A673 (cell line): ENCODE measurements at regions of chr16 and their contacts with region 1.

Region 1: GRCh38 chr16:90031186-90031930 is 12.1 kb upstream of the DBNDD1 start:
- DNase-seq: peak; percentile 41
- H3K4me3 ChIP-seq: no peak overlapping the region
- H3K27ac ChIP-seq: no peak overlapping the region
- H3K4me1 ChIP-seq: no peaks in the 10 kb centered on the region
- H3K27me3 ChIP-seq: no peaks in the 10 kb centered on the region
- CTCF ChIP-seq: no peak

Region 2: DNA sequence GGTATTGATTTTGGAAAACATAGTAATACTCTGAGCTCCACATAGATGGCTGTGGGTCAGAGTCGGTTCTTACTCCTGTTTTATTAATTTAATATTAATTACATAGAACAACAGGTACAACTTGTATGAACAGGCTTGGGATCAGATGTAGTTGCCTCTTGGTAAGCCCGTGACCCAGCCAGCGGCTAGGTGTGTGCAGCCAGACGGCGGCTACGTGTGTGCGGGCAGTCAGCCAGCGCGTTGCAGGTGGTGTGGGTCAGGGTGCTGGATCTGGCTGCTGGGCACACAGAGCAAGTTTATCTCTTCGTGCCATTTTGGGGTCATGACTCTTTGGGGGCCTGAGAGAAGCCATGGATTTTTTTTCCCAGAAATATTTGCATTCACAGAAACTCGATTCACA is 42.4 kb before region 1 on chr16:
- CTCF ChIA-PET with region 1: no interaction called
- POLR2A ChIA-PET with region 1: interaction called, 11 read pairs
- intact Hi-C with region 1: no loop called
- DNase-seq: no peak
- H3K4me3 ChIP-seq: no peak overlapping the region
- H3K27ac ChIP-seq: no peak overlapping the region
- H3K4me1 ChIP-seq: peaks cover 4% of the 10 kb centered on the region
- H3K27me3 ChIP-seq: no peaks in the 10 kb centered on the region
- CTCF ChIP-seq: no peak

Region 3: GRCh38 chr16:90057738-90058173 is 26.4 kb after region 1 on chr16:
- CTCF ChIA-PET with region 1: no interaction called
- POLR2A ChIA-PET with region 1: interaction called, 12 read pairs
- intact Hi-C with region 1: no loop called
- DNase-seq: peak; percentile 68
- H3K4me3 ChIP-seq: no peak overlapping the region
- H3K27ac ChIP-seq: no peak overlapping the region
- H3K4me1 ChIP-seq: no peaks in the 10 kb centered on the region
- H3K27me3 ChIP-seq: no peaks in the 10 kb centered on the region
- CTCF ChIP-seq: no peak